ENCODE measurements at regions of chr14 and their contacts with region 1.

Region 1: GRCh38 chr14:64294672-64295413 is 672 bp upstream of the ESR2 start:
- DNase-seq: peak; percentile 66 to 84
- ATAC-seq: peak; percentile 89 to 97 (median 94)
- H3K4me3 ChIP-seq: peak overlapping the region in 9 of 10 donors; percentile 18 to 57 (median 52)
- H3K27ac ChIP-seq: no peak overlapping the region
- H3K4me1 ChIP-seq: peaks cover 0 to 20% (median 11%) of the 10 kb centered on the region in 9 donors
- H3K27me3 ChIP-seq: peaks cover 0 to 51% (median 24%) of the 10 kb centered on the region in 7 donors
- CTCF ChIP-seq: peak; percentile 60 to 88 (median 80)

Region 2: DNA sequence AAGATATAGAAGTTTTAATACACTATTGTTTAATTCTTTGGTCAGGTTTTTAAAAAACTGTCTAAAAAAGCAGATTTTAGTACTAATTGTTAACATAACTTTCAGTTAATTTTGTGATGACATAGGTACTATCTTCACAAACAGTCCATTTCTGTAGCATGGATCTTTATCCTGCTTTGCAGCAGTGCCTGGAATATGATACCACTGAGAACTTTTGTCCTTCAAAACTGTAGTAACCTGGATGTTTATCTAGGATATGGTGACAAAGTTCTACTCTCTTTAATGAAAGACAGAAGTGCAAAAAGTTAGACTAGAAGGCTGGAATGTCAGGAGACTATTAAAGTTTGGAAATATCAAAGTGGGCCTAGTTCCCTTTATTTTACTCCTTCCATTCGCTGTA is 282.1 kb before region 1 on chr14:
- intact Hi-C with region 1: loop called in 3 of 10 experiments (anchors 10 kb)
- DNase-seq: no peak
- ATAC-seq: no peak
- H3K4me3 ChIP-seq: no peak overlapping the region
- H3K27ac ChIP-seq: no peak overlapping the region
- H3K4me1 ChIP-seq: no peaks in the 10 kb centered on the region
- H3K27me3 ChIP-seq: no peaks in the 10 kb centered on the region
- CTCF ChIP-seq: no peak

Region 3: DNA sequence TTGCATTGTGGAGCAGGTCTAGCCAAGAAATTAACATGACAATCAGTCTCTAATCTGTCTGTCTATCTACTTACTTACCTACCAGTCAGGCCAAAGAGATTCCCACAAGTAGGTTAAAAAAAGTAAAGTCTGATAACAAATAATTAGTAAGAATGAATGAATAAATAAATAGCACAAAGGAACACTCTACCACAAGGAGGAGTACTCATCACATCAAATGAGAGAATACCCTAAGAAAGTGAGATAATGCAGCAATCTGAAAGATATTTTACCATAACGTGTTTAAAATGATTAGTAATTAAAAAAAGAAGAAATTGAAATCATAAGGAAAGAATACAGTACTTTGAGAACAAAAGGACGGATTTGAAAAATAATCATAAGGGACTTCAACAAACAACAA is 254.8 kb before region 1 on chr14:
- intact Hi-C with region 1: loop called in 2 of 10 experiments (anchors 10 kb)
- DNase-seq: no peak
- ATAC-seq: no peak
- H3K4me3 ChIP-seq: no peak overlapping the region
- H3K27ac ChIP-seq: no peak overlapping the region
- H3K4me1 ChIP-seq: peaks cover 0 to 9% (median 0%) of the 10 kb centered on the region in 9 donors
- H3K27me3 ChIP-seq: no peaks in the 10 kb centered on the region
- CTCF ChIP-seq: peak in 5 of 9 donors; percentile 17 to 44 (median 28)

Region 4: DNA sequence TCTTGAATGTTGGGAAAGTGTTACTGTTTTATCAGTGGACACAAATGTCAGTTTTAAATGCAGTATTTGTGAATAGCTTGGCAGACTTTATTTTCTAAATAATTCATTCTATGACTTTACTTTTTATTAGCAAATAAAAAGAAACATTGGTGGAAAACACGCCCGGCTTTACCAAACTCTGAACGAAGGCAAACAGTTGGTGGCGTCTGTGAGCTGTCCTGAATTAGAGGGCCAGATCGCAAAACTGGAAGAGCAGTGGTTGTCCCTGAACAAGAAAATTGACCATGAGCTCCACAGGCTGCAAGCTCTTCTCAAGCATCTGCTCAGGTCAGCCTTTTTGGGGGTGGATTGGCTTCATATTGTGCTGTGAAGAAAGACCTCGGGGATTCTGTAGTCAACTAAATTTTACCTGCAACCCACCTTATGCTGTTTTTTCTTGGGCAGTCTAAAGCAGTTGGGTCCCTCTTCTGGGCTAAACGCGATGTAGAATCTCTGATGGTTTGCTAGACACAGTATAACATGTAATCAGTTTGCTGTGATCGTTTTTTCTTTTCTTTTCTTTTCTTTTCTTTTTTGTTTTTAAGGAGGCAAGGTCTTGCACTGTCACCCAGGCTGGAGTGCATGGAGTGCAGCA is 157.1 kb before region 1 on chr14:
- intact Hi-C with region 1: loop called in 6 of 10 experiments (anchors 5 to 10 kb)
- DNase-seq: no peak
- ATAC-seq: peak in 1 of 8 donors; percentile 49
- H3K4me3 ChIP-seq: no peak overlapping the region
- H3K27ac ChIP-seq: no peak overlapping the region
- H3K4me1 ChIP-seq: no peaks in the 10 kb centered on the region
- H3K27me3 ChIP-seq: no peaks in the 10 kb centered on the region
- CTCF ChIP-seq: peak in 8 of 9 donors; percentile 12 to 53 (median 34)

Region 5: GRCh38 chr14:64645220-64645892 is 350.5 kb after region 1 on chr14:
- intact Hi-C with region 1: no loop called
- DNase-seq: peak in 1 of 2 donors; percentile 43
- ATAC-seq: peak; percentile 46 to 87 (median 76)
- H3K4me3 ChIP-seq: no peak overlapping the region
- H3K27ac ChIP-seq: peak overlapping the region in 8 of 10 donors; percentile 48 to 78 (median 70)
- H3K4me1 ChIP-seq: peaks cover 0 to 20% (median 13%) of the 10 kb centered on the region in 9 donors
- H3K27me3 ChIP-seq: no peaks in the 10 kb centered on the region
- CTCF ChIP-seq: no peak

Measured in heart right ventricle (tissue), 16 donors.